ENCODE measurements at regions of chr17 and their contacts with region 1.

Region 1: DNA sequence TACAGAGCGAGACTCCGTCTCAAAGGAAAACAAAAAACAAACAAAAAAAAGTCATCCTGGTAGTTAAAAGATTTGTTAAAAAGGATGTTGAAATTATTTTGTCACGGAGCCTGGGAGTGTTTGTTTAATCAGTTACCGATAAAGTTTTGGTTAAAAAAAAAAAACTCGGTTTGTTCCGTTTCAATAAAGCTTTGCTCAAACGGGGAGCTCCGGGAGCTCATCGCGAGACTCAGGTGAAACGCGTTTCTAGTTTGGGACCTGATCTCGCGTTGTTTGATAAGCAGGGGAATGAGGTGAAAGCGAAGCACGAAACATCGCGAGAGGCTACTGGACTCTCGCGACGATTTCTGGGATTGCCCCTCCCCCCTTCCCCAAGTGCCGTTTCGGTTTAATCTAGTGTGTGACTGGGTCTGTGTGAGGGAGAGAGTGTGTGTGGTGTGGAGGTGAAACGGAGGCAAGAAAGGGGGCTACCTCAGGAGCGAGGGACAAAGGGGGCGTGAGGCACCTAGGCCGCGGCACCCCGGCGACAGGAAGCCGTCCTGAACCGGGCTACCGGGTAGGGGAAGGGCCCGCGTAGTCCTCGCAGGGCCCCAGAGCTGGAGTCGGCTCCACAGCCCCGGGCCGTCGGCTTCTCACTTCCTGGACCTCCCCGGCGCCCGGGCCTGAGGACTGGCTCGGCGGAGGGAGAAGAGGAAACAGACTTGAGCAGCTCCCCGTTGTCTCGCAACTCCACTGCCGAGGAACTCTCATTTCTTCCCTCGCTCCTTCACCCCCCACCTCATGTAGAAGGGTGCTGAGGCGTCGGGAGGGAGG is at the start of gene CDK12:
- DNase-seq: peak; percentile 96 to 98
- ATAC-seq: peak; percentile 89 to 90
- H3K4me3 ChIP-seq: peak within 1 kb of the TSS; percentile 87 to 99 (median 94)
- H3K27ac ChIP-seq: peak within 1 kb of the TSS; percentile 97 to 99 (median 98)
- H3K4me1 ChIP-seq: peaks cover 25 to 26% of the 10 kb centered on the region in 2 donors
- H3K27me3 ChIP-seq: no peaks in the 10 kb centered on the region
- CTCF ChIP-seq: peak in 1 of 5 experiments; percentile 58
- POLR2A ChIP-seq: peak; percentile 88 to 90
- total RNA-seq, gene CDK12: 10.6 to 20.9 (median 14.2) TPM

Region 2: GRCh38 chr17:39281806-39282205 is 179.5 kb before region 1 on chr17:
- in situ Hi-C with region 1: no loop called
- intact Hi-C with region 1: loop called (anchors 5 kb)
- DNase-seq: no peak
- ATAC-seq: no peak
- H3K4me3 ChIP-seq: no peak overlapping the region
- H3K27ac ChIP-seq: peak overlapping the region; percentile 82 to 94 (median 88)
- H3K4me1 ChIP-seq: peaks cover 45 to 53% of the 10 kb centered on the region in 2 donors
- H3K27me3 ChIP-seq: no peaks in the 10 kb centered on the region
- CTCF ChIP-seq: no peak
- POLR2A ChIP-seq: no peak

Region 3: DNA sequence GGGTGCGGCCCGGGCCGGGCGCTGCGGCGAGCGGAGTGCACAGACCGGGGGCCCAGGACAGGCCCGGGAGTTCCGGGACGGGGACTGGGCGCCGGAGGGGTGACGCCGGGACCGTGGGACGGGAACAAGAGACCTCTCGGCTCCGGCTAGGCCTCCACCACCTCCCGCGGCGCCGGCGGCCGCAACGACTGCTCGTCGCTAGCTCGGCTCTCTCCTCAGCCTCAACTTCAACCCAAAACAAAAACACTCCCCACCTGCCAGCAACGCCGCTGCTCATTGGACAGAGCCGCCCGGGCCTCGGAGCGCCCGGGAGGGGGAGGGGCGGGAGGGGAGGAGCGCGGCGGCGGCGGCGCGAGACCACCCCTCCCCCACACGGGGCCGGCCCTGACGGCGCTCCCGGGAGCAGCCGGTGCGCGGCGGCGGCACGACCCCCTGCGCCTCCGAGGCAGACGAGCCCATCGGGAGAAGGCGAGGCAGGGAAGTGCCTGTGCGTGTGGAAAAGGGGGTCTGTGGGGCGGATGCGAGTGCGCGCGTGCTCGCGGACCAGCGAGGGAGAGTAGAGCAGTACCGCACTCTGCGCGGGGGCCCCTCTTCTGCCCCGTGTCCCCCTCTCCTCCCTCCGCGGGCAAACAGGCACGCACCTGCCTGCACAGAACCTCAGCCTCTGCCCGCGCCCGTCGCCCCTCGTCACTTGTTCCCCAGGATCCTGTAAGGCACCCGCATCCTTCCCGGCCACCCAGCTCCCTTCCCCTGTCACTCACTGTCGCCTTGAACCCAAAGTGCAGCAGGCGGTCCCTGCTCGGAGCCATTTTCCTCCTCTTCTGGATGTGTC is 59.7 kb before region 1 on chr17 and contains the start of gene FBXL20:
- in situ Hi-C with region 1: no loop called
- intact Hi-C with region 1: loop called (anchors 1 kb)
- DNase-seq: peak; percentile 94 to 95
- ATAC-seq: peak; percentile 91 to 93
- H3K4me3 ChIP-seq: peak within 1 kb of the TSS; percentile 76 to 99 (median 96)
- H3K27ac ChIP-seq: peak within 1 kb of the TSS; percentile 94 to 99 (median 98)
- H3K4me1 ChIP-seq: peaks cover 21 to 22% of the 10 kb centered on the region in 2 donors
- H3K27me3 ChIP-seq: no peaks in the 10 kb centered on the region
- CTCF ChIP-seq: peak in 1 of 5 experiments; percentile 1
- POLR2A ChIP-seq: peak; percentile 91 to 99
- total RNA-seq, gene FBXL20: 10.4 to 15.4 (median 13.1) TPM

Region 4: GRCh38 chr17:39450847-39451581 is 10.3 kb before region 1 on chr17 and contains the start of gene MED1:
- in situ Hi-C with region 1: no loop called
- intact Hi-C with region 1: loop called (anchors 1 kb)
- DNase-seq: peak; percentile 90 to 95
- ATAC-seq: peak; percentile 99
- H3K4me3 ChIP-seq: peak within 1 kb of the TSS; percentile 78 to 99 (median 95)
- H3K27ac ChIP-seq: peak within 1 kb of the TSS; percentile 88 to 97 (median 91)
- H3K4me1 ChIP-seq: peaks cover 6 to 7% of the 10 kb centered on the region in 2 donors
- H3K27me3 ChIP-seq: no peaks in the 10 kb centered on the region
- CTCF ChIP-seq: no peak
- POLR2A ChIP-seq: peak; percentile 51 to 69
- total RNA-seq, gene MED1: 16.3 to 25.1 (median 17.8) TPM